ENCODE measurements at regions of chr11 and their contacts with region 1.

Region 1: DNA sequence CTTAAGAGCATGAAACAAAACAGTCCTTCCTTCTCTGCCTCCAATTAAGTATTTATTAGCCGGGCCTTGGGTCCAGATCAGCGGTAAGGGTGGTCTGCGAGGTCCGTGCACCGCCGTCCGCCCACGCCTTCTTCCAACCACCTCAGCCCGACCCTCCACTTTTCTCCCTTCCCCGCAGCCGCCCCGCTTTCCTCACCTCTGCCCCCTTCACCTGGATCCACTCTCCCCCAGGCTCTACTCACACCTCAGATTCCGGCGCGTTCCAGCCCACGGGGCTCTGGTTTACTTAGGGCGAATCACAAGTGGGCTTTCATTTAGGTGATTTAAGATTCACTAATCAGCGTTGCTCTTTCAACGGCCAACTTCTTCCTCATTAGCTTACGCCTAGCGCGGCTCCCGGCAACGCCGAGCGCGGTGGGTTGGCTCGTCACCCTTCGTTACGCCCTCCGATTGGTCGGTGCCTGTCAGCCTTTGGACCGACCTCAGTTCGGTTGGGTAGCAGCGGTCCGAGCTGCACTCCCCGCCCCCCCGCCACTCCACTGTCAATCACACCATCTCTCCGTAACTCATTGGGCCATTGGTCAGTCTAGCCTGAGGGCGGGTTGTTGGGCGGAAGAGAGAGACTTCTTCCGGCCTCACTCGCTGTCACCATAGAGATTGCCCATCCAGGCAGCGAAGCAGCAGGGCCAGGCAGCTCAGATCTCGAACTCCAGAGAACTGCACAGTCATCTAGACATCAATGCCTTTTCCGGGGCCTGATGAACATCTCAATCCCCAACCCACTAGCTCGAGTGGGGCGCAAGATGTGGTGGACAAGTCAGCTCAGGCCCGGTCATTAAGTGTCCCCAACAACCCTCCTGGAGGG is at the start of gene TMEM218:
- DNase-seq: peak; percentile 95 to 98
- H3K4me3 ChIP-seq: peak within 1 kb of the TSS; percentile 89
- H3K27ac ChIP-seq: peak within 1 kb of the TSS; percentile 41
- H3K4me1 ChIP-seq: peaks cover 12% of the 10 kb centered on the region; the same call in 1 of the 2 replicates
- H3K27me3 ChIP-seq: no peaks in the 10 kb centered on the region
- CTCF ChIP-seq: no peak
- total RNA-seq, gene TMEM218: 16.4 and 20.5 TPM in 2 replicates

Region 2: DNA sequence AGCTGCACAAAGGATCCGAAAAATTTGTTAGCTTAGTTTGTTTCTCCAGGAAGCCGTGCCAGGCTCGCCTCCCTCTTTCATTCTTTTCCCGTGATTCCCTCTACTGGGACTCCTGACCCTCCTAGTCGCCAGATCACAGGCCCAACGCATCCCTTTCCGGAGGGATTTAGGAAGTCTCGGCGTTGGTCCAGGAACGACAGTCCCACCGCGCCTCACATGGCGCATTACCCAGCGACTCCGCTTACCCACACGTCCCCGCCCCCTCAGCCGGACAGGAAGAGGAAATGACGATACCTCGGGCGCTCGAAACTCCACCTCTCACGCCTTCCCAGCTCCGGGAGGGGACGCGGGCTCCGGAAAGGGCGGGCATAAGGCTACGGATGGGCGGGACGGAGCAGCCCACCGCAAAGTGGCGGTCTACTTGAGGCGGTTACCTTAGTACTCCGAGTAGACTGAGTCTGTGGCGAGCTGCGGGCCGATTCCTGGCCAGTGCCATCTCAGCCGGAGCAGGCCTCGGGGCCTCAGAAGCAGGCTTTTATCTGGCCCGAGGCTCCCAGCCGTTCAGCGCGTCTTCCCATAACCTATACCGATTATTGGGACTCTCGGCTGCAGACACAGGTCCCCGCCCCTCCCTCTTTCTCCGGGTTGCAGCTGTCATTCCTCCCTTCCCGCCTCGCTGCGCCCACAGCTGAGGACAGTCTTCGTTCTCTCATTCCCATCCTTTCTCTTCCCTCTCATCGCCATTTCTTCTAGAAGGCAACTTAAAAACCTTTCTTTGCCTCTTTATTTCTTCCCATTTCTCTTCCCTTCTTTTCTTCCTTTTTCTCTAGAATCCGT is 157.6 kb before region 1 on chr11 and contains the start of gene CCDC15:
- CTCF ChIA-PET with region 1: no interaction called
- POLR2A ChIA-PET with region 1: interaction called, 5 read pairs
- intact Hi-C with region 1: loop called (anchors 1 kb)
- DNase-seq: peak; percentile 92 to 93
- H3K4me3 ChIP-seq: peak within 1 kb of the TSS; percentile 81
- H3K27ac ChIP-seq: peak within 1 kb of the TSS; percentile 64
- H3K4me1 ChIP-seq: peaks cover 16% of the 10 kb centered on the region
- H3K27me3 ChIP-seq: no peaks in the 10 kb centered on the region
- CTCF ChIP-seq: no peak
- total RNA-seq, gene CCDC15: 2.7 and 2.8 TPM in 2 replicates

Region 3: GRCh38 chr11:125062931-125063428 is 48.6 kb before region 1 on chr11 and contains the start of gene SLC37A2:
- CTCF ChIA-PET with region 1: no interaction called
- POLR2A ChIA-PET with region 1: interaction called, 11 read pairs
- intact Hi-C with region 1: loop called (anchors 1 kb)
- DNase-seq: peak; percentile 68 to 74
- H3K4me3 ChIP-seq: peak within 1 kb of the TSS; percentile 73
- H3K27ac ChIP-seq: peak within 1 kb of the TSS; percentile 36
- H3K4me1 ChIP-seq: peaks cover 10% of the 10 kb centered on the region; the same call in 1 of the 2 replicates
- H3K27me3 ChIP-seq: no peaks in the 10 kb centered on the region
- CTCF ChIP-seq: no peak; the same call in 1 of the 2 replicates
- total RNA-seq, gene SLC37A2: 14.6 and 24.0 TPM in 2 replicates

Region 4: DNA sequence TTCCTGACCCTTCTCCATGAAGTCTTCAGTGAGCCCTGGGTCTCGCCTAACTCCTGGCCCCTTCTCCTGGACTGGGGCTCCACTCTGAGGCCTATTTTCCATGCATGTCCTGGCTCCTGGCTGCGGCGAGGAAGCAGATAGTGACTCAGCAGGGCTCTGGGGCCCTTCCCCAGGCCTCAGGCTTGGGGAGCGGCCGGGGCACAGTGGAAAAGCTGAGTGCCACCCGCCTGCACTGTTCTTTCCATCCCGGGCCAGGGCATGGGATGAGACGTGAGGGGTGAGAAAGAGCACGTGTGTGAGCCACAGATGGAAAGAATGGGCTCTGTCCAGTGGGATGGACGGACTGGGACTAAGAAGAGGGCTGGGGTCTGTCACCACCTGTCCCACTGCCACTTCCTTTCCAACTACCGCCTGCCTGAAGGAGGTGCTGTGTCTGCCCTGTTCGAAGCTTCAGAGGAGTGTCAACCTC is 35.7 kb before region 1 on chr11:
- CTCF ChIA-PET with region 1: no interaction called
- POLR2A ChIA-PET with region 1: interaction called, 4 read pairs
- intact Hi-C with region 1: loop called (anchors 2 kb)
- DNase-seq: peak in 1 of 2 experiments; percentile 55
- H3K4me3 ChIP-seq: no peak overlapping the region
- H3K27ac ChIP-seq: no peak overlapping the region
- H3K4me1 ChIP-seq: peaks cover 63% of the 10 kb centered on the region
- H3K27me3 ChIP-seq: no peaks in the 10 kb centered on the region
- CTCF ChIP-seq: no peak

Region 5: DNA sequence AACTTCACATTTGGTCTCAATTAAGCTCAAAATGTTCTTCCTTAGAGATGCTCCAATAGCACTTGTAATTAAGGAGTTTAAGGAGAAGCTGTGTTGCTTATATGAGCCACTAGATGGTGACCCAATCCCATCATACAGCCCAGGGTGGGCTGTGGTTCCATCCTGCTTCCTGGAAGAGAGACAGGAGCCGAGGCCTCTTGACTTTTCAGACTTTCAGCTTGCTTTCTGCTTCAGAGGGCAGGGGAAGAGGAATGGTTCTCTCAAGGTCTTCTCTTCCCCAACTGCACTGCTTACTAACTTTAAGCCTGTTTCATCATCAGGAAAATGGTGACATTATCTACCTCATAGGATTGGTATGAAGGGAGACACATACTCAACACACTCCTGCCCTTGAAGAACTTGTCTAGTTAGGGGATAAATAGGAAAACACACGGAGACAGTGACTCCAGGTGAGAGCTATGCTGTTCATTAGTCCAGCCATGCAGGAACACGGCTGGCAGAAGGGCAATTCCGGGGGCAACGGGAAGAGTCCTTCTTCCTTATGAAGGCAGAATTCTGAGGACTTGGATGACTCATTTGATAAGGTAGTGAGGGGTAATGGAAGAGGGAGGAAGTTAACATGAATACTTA is 20.2 kb before region 1 on chr11:
- CTCF ChIA-PET with region 1: no interaction called
- POLR2A ChIA-PET with region 1: interaction called, 9 read pairs
- intact Hi-C with region 1: loop called (anchors 2 kb)
- DNase-seq: peak; percentile 36 to 95
- H3K4me3 ChIP-seq: no peak overlapping the region; the same call in 1 of the 2 replicates
- H3K27ac ChIP-seq: peak overlapping the region; percentile 70
- H3K4me1 ChIP-seq: peaks cover 29% of the 10 kb centered on the region
- H3K27me3 ChIP-seq: no peaks in the 10 kb centered on the region
- CTCF ChIP-seq: peak; percentile 72

Region 6: DNA sequence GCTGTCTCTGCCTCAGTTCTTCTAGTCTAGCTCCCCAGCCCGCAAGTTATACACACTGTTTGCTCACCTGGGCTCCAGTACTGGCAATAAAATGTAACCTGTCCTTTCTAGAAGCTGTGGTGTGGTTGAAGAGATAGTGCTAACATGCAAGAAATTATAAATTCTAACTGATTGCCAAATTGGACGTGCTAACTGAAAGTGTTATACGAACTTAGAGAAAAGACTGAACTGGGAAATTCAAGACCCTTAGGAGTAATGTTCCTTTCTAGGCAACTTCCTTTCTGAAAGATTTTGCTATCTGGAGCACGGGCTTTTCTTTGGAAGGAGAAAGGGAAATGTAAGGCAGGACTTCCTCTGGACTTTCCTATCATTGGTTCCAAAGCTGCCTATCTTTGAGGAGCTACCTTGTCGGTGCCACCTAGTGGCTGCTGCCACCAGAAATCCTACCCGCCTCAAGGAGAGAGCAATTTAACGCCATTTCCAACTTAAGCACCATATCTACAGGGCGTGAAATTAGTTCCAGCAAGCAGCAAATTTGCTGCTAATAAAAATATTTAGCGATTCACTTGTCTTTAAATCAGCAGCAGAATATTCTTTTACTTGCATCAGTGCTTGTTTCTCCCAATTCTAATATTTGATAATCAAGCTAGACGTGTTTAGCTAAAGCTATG is 12.5 kb after region 1 on chr11:
- CTCF ChIA-PET with region 1: interaction called, 4 read pairs
- POLR2A ChIA-PET with region 1: interaction called, 10 read pairs
- intact Hi-C with region 1: no loop called
- DNase-seq: peak; percentile 45 to 72
- H3K4me3 ChIP-seq: peak overlapping the region; percentile 57
- H3K27ac ChIP-seq: peak overlapping the region; percentile 57
- H3K4me1 ChIP-seq: peaks cover 14% of the 10 kb centered on the region
- H3K27me3 ChIP-seq: no peaks in the 10 kb centered on the region
- CTCF ChIP-seq: peak; percentile 80

Measured in PC-9 (cell line).